IMR-90 (cell line): ENCODE measurements at regions of chr12 and their contacts with region 1.

Region 1: GRCh38 chr12:51190820-51191219 is 17.9 kb upstream of the TFCP2 start:
- DNase-seq: no peak
- ATAC-seq: peak; percentile 35; the same call in 1 of the 2 replicates
- H3K4me3 ChIP-seq: no peak overlapping the region
- H3K27ac ChIP-seq: no peak overlapping the region
- H3K4me1 ChIP-seq: no peaks in the 10 kb centered on the region
- H3K27me3 ChIP-seq: no peaks in the 10 kb centered on the region
- CTCF ChIP-seq: no peak
- POLR2A ChIP-seq: no peak
- RAD21 ChIP-seq: no peak

Region 2: GRCh38 chr12:51217968-51218606 is 27.3 kb after region 1 on chr12 and contains the start of gene POU6F1:
- CTCF ChIA-PET with region 1: no interaction called
- POLR2A ChIA-PET with region 1: interaction called, 14 read pairs
- dilution Hi-C with region 1: no loop called
- in situ Hi-C with region 1: no loop called
- intact Hi-C with region 1: no loop called
- DNase-seq: peak; percentile 76
- ATAC-seq: peak; percentile 92
- H3K4me3 ChIP-seq: peak within 1 kb of the TSS; percentile 77
- H3K27ac ChIP-seq: peak within 1 kb of the TSS; percentile 83
- H3K4me1 ChIP-seq: peaks cover 4% of the 10 kb centered on the region
- H3K27me3 ChIP-seq: no peaks in the 10 kb centered on the region
- CTCF ChIP-seq: peak; percentile 51
- POLR2A ChIP-seq: peak; percentile 61; the same call in 1 of the 2 replicates
- RAD21 ChIP-seq: no peak; the same call in 1 of the 2 replicates
- total RNA-seq, gene POU6F1: 0.90 and 1.9 TPM in 2 replicates